ENCODE measurements at regions of chr1 and their contacts with region 1.

Region 1: DNA sequence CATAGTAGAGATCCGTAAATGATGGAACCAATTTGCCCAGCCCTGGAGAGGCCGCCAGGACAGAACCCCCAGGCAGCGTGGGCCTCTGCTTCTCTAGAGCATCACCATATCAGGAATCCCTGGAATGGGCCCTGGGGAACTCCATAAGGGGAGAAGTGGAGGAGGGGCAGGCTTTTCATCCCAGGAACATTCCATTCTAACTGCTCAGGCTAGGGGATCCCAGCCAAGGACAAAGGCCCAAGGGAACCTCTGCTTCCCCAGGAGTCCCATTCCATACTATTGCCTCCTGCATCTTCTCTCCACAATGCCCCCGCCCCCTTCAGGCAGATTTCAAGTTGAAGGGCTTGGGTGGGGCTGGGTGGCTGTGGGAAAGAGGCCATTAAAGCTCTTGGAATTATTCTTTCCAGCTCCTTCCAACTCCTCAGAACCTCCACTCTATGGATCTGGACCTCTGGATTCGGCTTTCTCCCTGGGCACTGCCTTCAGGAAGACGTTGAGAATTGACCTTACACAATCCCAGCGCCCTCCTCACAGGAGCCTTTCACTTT is 6.0 kb downstream of the TRNP1 start:
- DNase-seq: peak; percentile 85 to 91
- ATAC-seq: peak; percentile 81
- H3K4me3 ChIP-seq: no peak overlapping the region
- H3K27ac ChIP-seq: peak overlapping the region; percentile 74 to 95
- H3K4me1 ChIP-seq: no peaks in the 10 kb centered on the region
- H3K27me3 ChIP-seq: no peaks in the 10 kb centered on the region

Region 2: GRCh38 chr1:27010989-27011764 is 11.7 kb after region 1 on chr1:
- intact Hi-C with region 1: loop called in 1 of 2 experiments (anchors 1 kb)
- DNase-seq: peak; percentile 79 to 93
- ATAC-seq: no peak
- H3K4me3 ChIP-seq: peak overlapping the region; percentile 85 to 88
- H3K27ac ChIP-seq: peak overlapping the region; percentile 52 to 85
- H3K4me1 ChIP-seq: no peaks in the 10 kb centered on the region
- H3K27me3 ChIP-seq: no peaks in the 10 kb centered on the region

Region 3: DNA sequence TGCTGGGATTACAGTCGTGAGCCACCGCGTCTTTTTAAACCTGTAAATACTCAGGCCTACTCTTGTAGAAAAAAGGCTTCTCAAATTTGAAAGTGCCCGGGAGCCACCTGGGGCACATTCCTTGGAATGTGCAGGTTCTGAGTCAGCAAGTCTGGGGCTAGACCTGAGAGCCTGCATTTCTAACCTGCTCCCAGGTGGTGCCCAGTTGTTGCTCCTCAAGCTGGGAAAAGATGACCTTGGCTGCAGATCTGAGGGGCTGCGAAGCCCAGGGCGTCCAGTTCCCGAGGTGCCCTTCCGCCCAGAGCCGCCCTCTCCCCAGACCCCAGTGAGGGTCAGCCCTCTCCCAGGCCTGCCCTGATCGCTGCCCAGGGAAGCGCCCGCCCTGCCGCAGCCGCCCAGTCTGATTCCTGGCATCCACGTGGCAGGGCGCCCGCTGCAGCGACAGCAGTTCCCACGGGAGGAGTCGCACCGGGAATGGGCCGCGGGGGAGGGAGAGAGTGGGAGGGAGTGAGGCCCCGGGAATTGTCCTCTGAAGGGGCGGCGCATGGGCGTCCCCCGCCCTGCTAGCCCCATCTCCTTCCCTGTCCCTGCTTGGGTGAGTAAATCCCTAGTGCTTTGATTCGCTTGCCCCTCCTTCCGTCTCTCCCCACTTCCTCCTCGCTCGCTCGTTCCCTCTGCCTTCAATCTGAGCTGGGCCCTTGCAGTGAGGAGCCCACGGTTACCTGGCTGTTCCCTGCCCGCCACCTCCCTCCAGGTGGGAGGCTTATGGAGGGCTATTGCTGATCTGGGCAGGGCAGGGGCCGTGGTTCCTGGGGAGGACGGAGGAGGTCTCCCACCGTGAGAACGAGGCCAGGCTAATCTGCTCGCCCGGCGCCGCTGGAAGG is 32.0 kb after region 1 on chr1:
- intact Hi-C with region 1: loop called in 1 of 2 experiments (anchors 5 kb)
- DNase-seq: peak; percentile 93 to 96
- ATAC-seq: peak; percentile 86
- H3K4me3 ChIP-seq: no peak overlapping the region
- H3K27ac ChIP-seq: peak overlapping the region in 1 of 2 donors; percentile 49
- H3K4me1 ChIP-seq: peaks cover 3 to 7% of the 10 kb centered on the region in 2 donors
- H3K27me3 ChIP-seq: no peaks in the 10 kb centered on the region

Region 4: DNA sequence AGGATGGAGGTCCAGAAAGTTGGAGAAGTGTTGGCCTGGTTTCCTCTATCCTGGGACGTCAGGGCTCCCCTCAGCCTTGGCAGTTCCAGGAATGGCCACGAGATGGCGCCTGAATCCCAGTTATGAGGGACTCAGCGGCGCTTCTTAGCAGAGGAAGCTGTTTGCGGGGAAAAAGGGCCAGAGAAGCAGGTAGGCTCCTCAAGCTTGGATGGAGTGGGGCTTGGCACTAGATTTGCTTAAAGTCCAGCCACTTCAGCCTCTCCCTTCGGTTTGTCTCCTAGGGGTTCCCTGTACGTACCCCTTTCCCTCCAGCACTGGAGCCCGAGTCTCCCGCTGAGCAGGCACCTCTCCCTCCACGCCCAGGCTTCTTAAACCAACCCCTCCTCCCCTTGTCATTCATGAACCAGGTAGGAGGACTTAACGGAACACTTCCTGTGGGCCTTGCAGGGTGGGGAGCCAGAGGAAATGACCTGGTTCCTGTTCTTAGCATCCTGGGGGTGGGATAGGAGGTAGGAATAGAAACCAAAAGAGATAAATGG is 45.2 kb after region 1 on chr1:
- intact Hi-C with region 1: loop called in 1 of 2 experiments (anchors 2 kb)
- DNase-seq: peak; percentile 88 to 97
- ATAC-seq: peak; percentile 94
- H3K4me3 ChIP-seq: no peak overlapping the region
- H3K27ac ChIP-seq: no peak overlapping the region
- H3K4me1 ChIP-seq: no peaks in the 10 kb centered on the region
- H3K27me3 ChIP-seq: no peaks in the 10 kb centered on the region

Region 5: GRCh38 chr1:27136998-27137542 is 137.6 kb after region 1 on chr1:
- intact Hi-C with region 1: no loop called
- DNase-seq: peak in 1 of 2 donors; percentile 85
- ATAC-seq: peak; percentile 56
- H3K4me3 ChIP-seq: no peak overlapping the region
- H3K27ac ChIP-seq: no peak overlapping the region
- H3K4me1 ChIP-seq: no peaks in the 10 kb centered on the region
- H3K27me3 ChIP-seq: no peaks in the 10 kb centered on the region

Region 6: GRCh38 chr1:27589841-27590426 is 590.4 kb after region 1 on chr1:
- intact Hi-C with region 1: no loop called
- DNase-seq: peak; percentile 81 to 86
- ATAC-seq: peak; percentile 58
- H3K4me3 ChIP-seq: no peak overlapping the region
- H3K27ac ChIP-seq: peak overlapping the region in 1 of 2 donors; percentile 13
- H3K4me1 ChIP-seq: peaks cover 0 to 3% of the 10 kb centered on the region in 2 donors
- H3K27me3 ChIP-seq: no peaks in the 10 kb centered on the region

Measured in aorta (tissue), 5 donors.